ENCODE measurements at regions of chr2 and their contacts with region 1.

Region 1: GRCh38 chr2:55050133-55050994 is at the start of gene RTN4:
- DNase-seq: peak; percentile 99 to 100
- H3K4me3 ChIP-seq: peak within 1 kb of the TSS; percentile 93
- H3K27ac ChIP-seq: peak within 1 kb of the TSS; percentile 96
- H3K4me1 ChIP-seq: peaks cover 36% of the 10 kb centered on the region
- H3K27me3 ChIP-seq: no peaks in the 10 kb centered on the region
- CTCF ChIP-seq: 0 out of 2 replicates have a peak, but pooled peaks have one; percentile 27
- total RNA-seq, gene RTN4: 342 and 343 TPM in 2 replicates

Region 2: GRCh38 chr2:54471221-54471711 is 579.1 kb before region 1 on chr2:
- CTCF ChIA-PET with region 1: no interaction called
- POLR2A ChIA-PET with region 1: interaction called, 17 read pairs
- intact Hi-C with region 1: no loop called
- DNase-seq: peak; percentile 42 to 57
- H3K4me3 ChIP-seq: no peak overlapping the region
- H3K27ac ChIP-seq: no peak overlapping the region
- H3K4me1 ChIP-seq: no peaks in the 10 kb centered on the region
- H3K27me3 ChIP-seq: no peaks in the 10 kb centered on the region
- CTCF ChIP-seq: no peak

Region 3: DNA sequence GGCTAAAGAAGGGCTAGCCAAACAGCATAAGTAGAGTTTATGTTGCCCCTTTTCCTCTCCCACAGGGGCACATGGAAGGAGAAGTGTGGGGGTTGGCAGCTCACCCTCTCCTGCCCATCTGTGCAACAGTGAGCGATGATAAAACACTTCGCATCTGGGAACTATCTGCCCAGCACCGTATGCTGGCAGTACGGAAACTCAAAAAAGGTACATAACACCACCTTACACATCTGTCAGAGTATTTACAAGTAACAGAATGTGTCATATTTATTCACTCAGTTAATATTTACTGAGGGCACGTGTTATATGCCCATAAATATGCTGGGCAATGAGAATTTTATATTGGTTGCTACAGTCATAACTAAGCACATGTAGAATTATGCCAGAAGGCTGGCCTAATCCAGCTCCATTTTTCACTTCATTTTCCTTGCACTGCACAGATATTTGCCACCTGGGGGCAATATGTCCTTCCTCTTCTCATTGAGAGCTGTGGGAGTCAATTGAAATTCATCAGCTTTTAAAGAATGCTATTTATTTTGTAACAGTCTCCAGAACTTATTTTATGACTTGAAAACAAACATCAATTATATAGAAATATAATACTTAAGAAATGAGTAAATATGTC is 150.7 kb before region 1 on chr2:
- CTCF ChIA-PET with region 1: interaction called, 6 read pairs
- POLR2A ChIA-PET with region 1: no interaction called
- intact Hi-C with region 1: loop called (anchors 2 kb)
- DNase-seq: peak in 1 of 2 experiments; percentile 53
- H3K4me3 ChIP-seq: no peak overlapping the region
- H3K27ac ChIP-seq: no peak overlapping the region
- H3K4me1 ChIP-seq: peaks cover 23% of the 10 kb centered on the region
- H3K27me3 ChIP-seq: no peaks in the 10 kb centered on the region
- CTCF ChIP-seq: peak; percentile 76

Region 4: DNA sequence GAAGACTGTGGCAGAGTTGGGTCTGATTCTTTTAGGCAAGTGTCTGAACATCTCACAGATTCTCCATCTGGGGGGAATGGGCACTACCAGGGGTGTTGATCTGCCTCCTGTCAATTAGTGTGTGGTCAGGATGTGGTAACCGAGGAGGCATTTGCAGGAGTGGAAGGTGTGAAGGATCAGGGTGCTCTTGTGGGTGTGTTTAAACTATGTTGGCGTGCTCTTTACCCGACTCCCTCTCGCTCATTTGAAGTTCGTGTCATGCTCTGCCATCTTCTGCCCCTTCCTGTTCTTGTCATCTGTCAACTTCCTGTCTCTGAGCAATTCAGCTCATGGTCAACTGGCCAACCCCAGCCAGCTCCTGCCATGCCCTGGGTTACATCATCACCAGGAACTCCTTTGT is 108.0 kb before region 1 on chr2:
- CTCF ChIA-PET with region 1: no interaction called
- POLR2A ChIA-PET with region 1: no interaction called
- intact Hi-C with region 1: no loop called
- DNase-seq: no peak
- H3K4me3 ChIP-seq: no peak overlapping the region
- H3K27ac ChIP-seq: no peak overlapping the region
- H3K4me1 ChIP-seq: peaks cover 18% of the 10 kb centered on the region
- H3K27me3 ChIP-seq: no peaks in the 10 kb centered on the region
- CTCF ChIP-seq: no peak

Region 5: GRCh38 chr2:55000341-55000740 is 50.0 kb before region 1 on chr2:
- CTCF ChIA-PET with region 1: no interaction called
- POLR2A ChIA-PET with region 1: interaction called, 11 read pairs
- intact Hi-C with region 1: no loop called
- DNase-seq: no peak
- H3K4me3 ChIP-seq: no peak overlapping the region
- H3K27ac ChIP-seq: peak overlapping the region; percentile 18; the same call in 1 of the 2 replicates
- H3K4me1 ChIP-seq: 0 out of 2 replicates have a peak, but pooled peaks cover 28% of the 10 kb centered on the region
- H3K27me3 ChIP-seq: no peaks in the 10 kb centered on the region
- CTCF ChIP-seq: no peak

Region 6: DNA sequence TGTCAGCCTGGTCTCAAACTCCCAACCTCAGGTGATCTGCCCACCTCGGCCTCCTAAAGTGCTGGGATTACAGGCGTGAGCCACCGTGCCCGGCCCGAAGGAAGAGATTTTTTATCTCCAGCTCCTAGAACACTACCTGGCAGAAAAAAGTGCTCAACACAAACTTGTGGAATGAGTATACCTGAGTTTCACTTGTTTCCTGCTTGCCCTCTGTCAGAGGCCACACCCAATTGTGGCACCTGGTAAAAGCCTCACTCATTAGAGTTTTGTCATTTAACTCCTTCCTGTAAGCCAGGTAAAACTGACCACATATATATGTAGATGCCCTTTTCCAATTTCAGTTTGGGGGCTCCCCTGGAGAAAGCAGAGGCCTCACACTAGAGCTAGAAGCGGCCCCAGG is 42.1 kb after region 1 on chr2:
- CTCF ChIA-PET with region 1: interaction called, 3 read pairs
- POLR2A ChIA-PET with region 1: interaction called, 20 read pairs
- intact Hi-C with region 1: loop called (anchors 1 kb)
- DNase-seq: peak; percentile 53 to 91
- H3K4me3 ChIP-seq: peak overlapping the region; percentile 19; the same call in 1 of the 2 replicates
- H3K27ac ChIP-seq: peak overlapping the region; percentile 98
- H3K4me1 ChIP-seq: peaks cover 84% of the 10 kb centered on the region
- H3K27me3 ChIP-seq: no peaks in the 10 kb centered on the region
- CTCF ChIP-seq: no peak

Region 7: GRCh38 chr2:55168221-55169154 is 118.1 kb after region 1 on chr2:
- CTCF ChIA-PET with region 1: interaction called, 6 read pairs
- POLR2A ChIA-PET with region 1: interaction called, 4 read pairs
- intact Hi-C with region 1: loop called (anchors 1 kb)
- DNase-seq: peak; percentile 41 to 68
- H3K4me3 ChIP-seq: no peak overlapping the region
- H3K27ac ChIP-seq: no peak overlapping the region
- H3K4me1 ChIP-seq: peaks cover 52% of the 10 kb centered on the region
- H3K27me3 ChIP-seq: no peaks in the 10 kb centered on the region
- CTCF ChIP-seq: peak; percentile 92

Region 8: GRCh38 chr2:55282110-55282917 is 231.9 kb after region 1 on chr2:
- CTCF ChIA-PET with region 1: no interaction called
- POLR2A ChIA-PET with region 1: no interaction called
- intact Hi-C with region 1: no loop called
- DNase-seq: peak; percentile 77 to 90
- H3K4me3 ChIP-seq: peak overlapping the region; percentile 80
- H3K27ac ChIP-seq: peak overlapping the region; percentile 40
- H3K4me1 ChIP-seq: peaks cover 12% of the 10 kb centered on the region; the same call in 1 of the 2 replicates
- H3K27me3 ChIP-seq: no peaks in the 10 kb centered on the region
- CTCF ChIP-seq: no peak

Region 9: GRCh38 chr2:55617175-55618024 is 567.0 kb after region 1 on chr2 and contains the start of gene PPP4R3B:
- CTCF ChIA-PET with region 1: no interaction called
- POLR2A ChIA-PET with region 1: no interaction called
- intact Hi-C with region 1: loop called (anchors 2 kb)
- DNase-seq: peak; percentile 100
- H3K4me3 ChIP-seq: peak within 1 kb of the TSS; percentile 100
- H3K27ac ChIP-seq: peak within 1 kb of the TSS; percentile 90
- H3K4me1 ChIP-seq: peaks cover 23% of the 10 kb centered on the region
- H3K27me3 ChIP-seq: no peaks in the 10 kb centered on the region
- CTCF ChIP-seq: peak; percentile 48; the same call in 1 of the 2 replicates
- total RNA-seq, gene PPP4R3B: 66.2 and 73.4 TPM in 2 replicates

Measured in PC-9 (cell line).